AG04449 (cell line): ENCODE measurements at regions of chr9 and their contacts with region 1.

Region 1: DNA sequence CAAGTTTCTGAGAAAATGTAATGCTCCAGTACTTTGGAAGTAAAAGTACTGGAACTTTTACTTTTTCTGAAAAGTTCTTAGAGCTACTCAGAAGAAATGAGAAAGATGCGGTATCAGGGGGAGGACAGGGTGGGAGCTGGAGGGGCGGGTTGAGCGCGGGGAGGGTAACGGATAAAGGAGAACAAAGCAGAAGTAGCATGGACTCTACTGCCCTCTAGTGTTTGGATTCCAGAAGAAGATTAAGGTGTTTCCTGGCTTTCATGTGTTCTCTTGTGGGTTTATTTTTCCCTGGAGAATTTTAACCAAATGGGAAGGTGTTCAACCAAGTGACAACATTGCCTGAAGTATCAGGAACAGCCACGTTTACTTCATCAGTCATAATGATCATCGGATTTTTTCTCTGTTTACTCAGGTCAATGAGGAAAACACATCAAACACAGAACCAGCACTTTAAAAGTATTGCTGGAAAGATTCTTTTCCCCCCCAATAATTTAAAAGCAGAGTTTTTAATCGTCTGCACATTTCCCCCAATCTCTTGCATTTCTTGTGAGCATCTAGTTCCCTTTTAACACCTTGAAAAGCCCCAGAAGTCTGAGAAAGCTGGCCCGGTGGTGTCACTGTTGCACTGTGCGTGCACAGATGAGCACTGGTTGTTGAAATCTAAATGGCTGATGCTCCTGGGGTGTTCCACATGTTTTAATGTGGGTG is 190.6 kb downstream of the MPDZ start:
- DNase-seq: no peak
- H3K4me3 ChIP-seq: no peak overlapping the region; the same call in 1 of the 2 replicates
- CTCF ChIP-seq: peak; percentile 70

Region 2: DNA sequence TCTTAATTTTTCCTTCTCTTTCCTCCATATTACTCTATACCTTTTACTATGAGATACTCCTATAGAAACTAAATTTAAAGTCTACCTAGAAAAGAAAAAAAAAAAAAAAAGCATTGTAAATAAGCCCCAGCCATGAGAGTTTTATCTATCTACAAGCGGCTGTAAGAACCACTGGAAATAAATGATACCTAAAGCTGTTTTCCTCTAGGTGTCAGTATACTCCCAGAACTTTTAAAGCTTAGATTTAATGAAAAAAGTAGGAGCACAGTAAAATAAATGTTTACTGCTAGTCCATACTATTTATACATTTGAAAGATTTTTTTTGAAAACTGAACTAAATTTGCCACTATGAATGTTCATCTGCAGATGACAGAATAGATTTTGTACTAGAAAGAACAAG is 369.4 kb before region 1 on chr9:
- CTCF ChIA-PET with region 1: interaction called, 60 read pairs
- POLR2A ChIA-PET with region 1: no interaction called
- DNase-seq: no peak
- H3K4me3 ChIP-seq: no peak overlapping the region
- CTCF ChIP-seq: peak; percentile 34

Region 3: DNA sequence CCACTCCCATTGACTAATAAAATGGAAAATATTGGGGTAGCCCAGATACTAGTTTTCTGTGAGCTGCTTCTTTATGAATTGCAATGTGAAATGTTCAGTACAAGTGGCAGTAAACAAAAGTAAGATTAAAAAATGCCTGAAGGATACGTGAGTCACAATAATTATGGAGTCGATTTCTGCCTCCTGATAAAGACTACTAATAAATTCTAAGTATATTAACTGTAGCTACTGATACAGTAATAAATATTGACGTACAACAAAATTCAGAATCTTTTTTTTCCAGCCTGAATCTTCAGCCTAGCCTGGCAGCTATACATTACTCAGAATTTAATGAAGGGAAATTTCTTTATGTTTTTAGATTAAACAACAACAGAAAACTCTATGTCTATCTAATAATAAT is 27.5 kb before region 1 on chr9:
- CTCF ChIA-PET with region 1: interaction called, 11 read pairs
- POLR2A ChIA-PET with region 1: no interaction called
- DNase-seq: no peak
- H3K4me3 ChIP-seq: no peak overlapping the region
- CTCF ChIP-seq: no peak

Region 4: GRCh38 chr9:13100914-13101572 is 12.2 kb after region 1 on chr9:
- CTCF ChIA-PET with region 1: interaction called, 45 read pairs
- POLR2A ChIA-PET with region 1: no interaction called
- DNase-seq: no peak
- H3K4me3 ChIP-seq: no peak overlapping the region
- CTCF ChIP-seq: no peak